ENCODE measurements at regions of chr15 and their contacts with region 1.

Region 1: DNA sequence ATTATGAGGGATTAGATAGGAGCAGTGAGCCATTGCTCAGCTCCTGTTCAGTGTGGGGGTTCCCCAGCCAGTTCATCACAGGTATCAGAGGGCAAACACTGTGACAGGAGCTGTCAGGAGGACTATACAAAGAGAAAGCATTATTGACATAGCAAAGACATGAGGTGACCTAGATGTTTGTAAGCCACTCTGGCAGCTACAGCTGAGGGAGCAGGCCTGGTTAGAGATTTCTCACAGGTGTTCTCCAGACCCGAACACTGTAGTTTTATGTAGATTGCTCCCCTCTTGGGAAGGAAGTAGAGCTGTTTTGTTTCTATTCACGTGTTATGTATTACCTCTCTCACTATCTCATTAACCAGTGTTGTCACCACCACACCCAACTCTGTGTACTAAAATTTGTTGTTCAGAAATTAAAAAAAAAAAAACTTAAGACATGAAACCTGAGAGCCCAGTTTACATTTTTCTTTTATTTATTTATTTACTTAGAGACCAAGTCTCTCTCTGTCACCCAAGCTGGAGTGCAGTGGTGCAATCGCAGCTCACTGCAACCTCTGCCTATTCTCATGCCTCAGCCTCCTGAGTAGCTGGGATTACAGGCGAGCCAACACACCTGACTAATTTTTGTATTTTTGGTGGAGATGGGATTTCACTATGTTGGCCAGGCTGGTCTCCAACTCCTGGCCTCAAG is 123.7 kb downstream of the RBPMS2 start:
- DNase-seq: peak; percentile 63
- ATAC-seq: peak; percentile 97
- H3K4me3 Mint-ChIP-seq: no peak overlapping the region
- H3K27ac Mint-ChIP-seq: peak overlapping the region; percentile 87
- H3K4me1 Mint-ChIP-seq: peaks cover 47% of the 10 kb centered on the region
- H3K27me3 Mint-ChIP-seq: no peaks in the 10 kb centered on the region

Region 2: GRCh38 chr15:64430000-64430735 is 221.5 kb before region 1 on chr15:
- CTCF ChIA-PET with region 1: interaction called, 5 read pairs
- POLR2A ChIA-PET with region 1: no interaction called
- intact Hi-C with region 1: loop called (anchors 2 to 5 kb)
- DNase-seq: peak; percentile 35
- ATAC-seq: peak; percentile 61
- H3K4me3 Mint-ChIP-seq: no peak overlapping the region
- H3K27ac Mint-ChIP-seq: peak overlapping the region; percentile 92
- H3K4me1 Mint-ChIP-seq: peaks cover 44% of the 10 kb centered on the region
- H3K27me3 Mint-ChIP-seq: no peaks in the 10 kb centered on the region

Region 3: GRCh38 chr15:64466408-64467141 is 185.1 kb before region 1 on chr15:
- CTCF ChIA-PET with region 1: interaction called, 4 read pairs
- POLR2A ChIA-PET with region 1: no interaction called
- intact Hi-C with region 1: loop called in 1 of 2 experiments (anchors 5 kb)
- DNase-seq: no peak
- ATAC-seq: peak; percentile 44
- H3K4me3 Mint-ChIP-seq: no peak overlapping the region
- H3K27ac Mint-ChIP-seq: peak overlapping the region; percentile 63
- H3K4me1 Mint-ChIP-seq: peaks cover 66% of the 10 kb centered on the region
- H3K27me3 Mint-ChIP-seq: no peaks in the 10 kb centered on the region